Activated CD8-positive, alpha-beta T cell treated with anti-CD3 and anti-CD28 coated beads for 36 hours (primary cell): ENCODE measurements at regions of chr1 and their contacts with region 1.

Region 1: GRCh38 chr1:205485338-205486228 is 18.9 kb upstream of the CDK18 start:
- DNase-seq: peak; percentile 79
- ATAC-seq: peak; percentile 76
- H3K4me3 Mint-ChIP-seq: no peak overlapping the region
- H3K27ac Mint-ChIP-seq: no peak overlapping the region
- H3K4me1 Mint-ChIP-seq: peaks cover 27% of the 10 kb centered on the region
- H3K27me3 Mint-ChIP-seq: peaks cover 42% of the 10 kb centered on the region
- CTCF ChIP-seq: peak; percentile 95

Region 2: GRCh38 chr1:205273551-205273982 is 212.0 kb before region 1 on chr1:
- CTCF ChIA-PET with region 1: interaction called, 21 read pairs
- POLR2A ChIA-PET with region 1: no interaction called
- intact Hi-C with region 1: no loop called
- DNase-seq: peak; percentile 92
- ATAC-seq: peak; percentile 94
- H3K4me3 Mint-ChIP-seq: no peak overlapping the region
- H3K27ac Mint-ChIP-seq: no peak overlapping the region
- H3K4me1 Mint-ChIP-seq: peaks cover 33% of the 10 kb centered on the region
- H3K27me3 Mint-ChIP-seq: no peaks in the 10 kb centered on the region
- CTCF ChIP-seq: peak; percentile 99

Region 3: DNA sequence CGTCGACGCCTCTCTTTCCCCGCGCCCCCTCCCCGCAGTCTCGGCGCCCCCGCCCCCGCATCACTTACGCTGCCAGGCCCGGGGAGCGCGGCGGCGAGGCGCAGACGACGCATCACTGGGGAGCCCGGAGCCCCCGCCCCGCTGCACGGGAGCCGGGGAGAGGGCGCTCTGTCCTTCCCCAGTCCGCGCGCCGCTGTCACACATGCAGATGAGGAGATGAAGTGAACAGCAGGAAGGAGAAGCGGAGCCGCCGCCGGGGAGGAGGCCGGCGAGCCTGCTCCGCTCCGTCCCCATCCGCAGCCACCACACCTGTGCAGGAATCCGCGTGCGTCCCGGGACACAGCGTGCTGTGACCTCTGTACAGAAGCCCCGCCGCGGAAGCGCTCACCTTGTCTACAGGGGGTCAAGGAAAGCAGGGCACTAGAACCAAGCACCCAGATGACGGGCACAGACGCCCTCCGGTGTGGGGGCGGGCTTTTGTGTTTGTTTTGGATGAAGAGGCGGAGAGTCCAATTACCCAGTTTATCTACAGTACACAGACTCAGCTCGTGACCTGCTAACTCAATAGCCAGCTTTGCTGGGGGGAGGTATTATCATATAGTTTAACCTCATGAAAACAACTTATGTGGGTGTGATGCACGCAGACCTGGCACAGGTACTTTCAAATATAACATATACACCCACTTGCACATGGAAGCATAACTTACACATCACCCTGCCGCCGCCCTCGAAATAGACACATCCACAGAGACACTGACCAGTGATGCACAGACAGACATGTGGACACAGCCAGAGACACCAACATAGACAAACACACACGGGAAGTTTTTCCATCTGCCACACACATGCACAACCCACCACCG is 141.3 kb before region 1 on chr1:
- CTCF ChIA-PET with region 1: interaction called, 15 read pairs
- POLR2A ChIA-PET with region 1: no interaction called
- intact Hi-C with region 1: no loop called
- DNase-seq: peak; percentile 65
- ATAC-seq: peak; percentile 77
- H3K4me3 Mint-ChIP-seq: peak overlapping the region; percentile 35
- H3K27ac Mint-ChIP-seq: no peak overlapping the region
- H3K4me1 Mint-ChIP-seq: peaks cover 11% of the 10 kb centered on the region
- H3K27me3 Mint-ChIP-seq: peaks cover 42% of the 10 kb centered on the region
- CTCF ChIP-seq: no peak

Region 4: GRCh38 chr1:205396967-205397616 is 88.5 kb before region 1 on chr1:
- CTCF ChIA-PET with region 1: interaction called, 199 read pairs
- POLR2A ChIA-PET with region 1: no interaction called
- intact Hi-C with region 1: loop called (anchors 1 kb)
- DNase-seq: peak; percentile 29
- ATAC-seq: peak; percentile 88
- H3K4me3 Mint-ChIP-seq: no peak overlapping the region
- H3K27ac Mint-ChIP-seq: no peak overlapping the region
- H3K4me1 Mint-ChIP-seq: no peaks in the 10 kb centered on the region
- H3K27me3 Mint-ChIP-seq: peaks cover 4% of the 10 kb centered on the region
- CTCF ChIP-seq: peak; percentile 87

Region 5: DNA sequence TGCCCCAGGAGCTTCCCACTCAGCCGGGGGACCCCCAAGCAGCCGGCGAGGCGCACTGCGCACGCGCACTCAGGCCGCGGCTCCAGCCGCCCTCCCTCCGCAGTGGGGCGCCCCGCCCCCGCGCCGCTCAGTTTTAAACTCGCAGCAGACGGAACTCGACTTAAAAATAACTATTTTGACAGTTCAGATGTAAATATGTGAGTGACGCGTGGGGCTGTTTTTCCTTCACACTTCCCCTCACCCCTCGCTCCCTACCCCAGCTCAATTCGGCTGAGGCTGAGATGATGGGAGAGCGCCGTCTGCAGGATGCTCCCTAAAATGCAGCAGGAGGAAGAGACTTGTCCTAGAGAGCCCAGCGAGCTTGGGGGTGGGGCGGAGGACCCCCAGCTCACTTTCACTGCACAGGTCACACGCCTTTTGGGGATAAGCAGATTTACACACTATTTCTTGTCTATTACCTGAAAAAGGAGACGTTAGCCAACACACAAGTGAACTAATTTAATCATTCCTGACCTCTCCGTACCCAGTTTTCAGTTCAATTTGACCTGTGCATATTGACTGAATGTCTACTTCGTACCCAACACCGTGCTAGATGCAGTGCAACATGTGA is 54.8 kb before region 1 on chr1:
- CTCF ChIA-PET with region 1: interaction called, 153 read pairs
- POLR2A ChIA-PET with region 1: no interaction called
- intact Hi-C with region 1: no loop called
- DNase-seq: peak; percentile 70
- ATAC-seq: peak; percentile 87
- H3K4me3 Mint-ChIP-seq: peak overlapping the region; percentile 74
- H3K27ac Mint-ChIP-seq: no peak overlapping the region
- H3K4me1 Mint-ChIP-seq: peaks cover 7% of the 10 kb centered on the region
- H3K27me3 Mint-ChIP-seq: no peaks in the 10 kb centered on the region
- CTCF ChIP-seq: peak; percentile 82

Region 6: GRCh38 chr1:205504311-205504984 is 18.9 kb after region 1 on chr1 and contains the start of gene CDK18:
- CTCF ChIA-PET with region 1: interaction called, 63 read pairs
- POLR2A ChIA-PET with region 1: no interaction called
- intact Hi-C with region 1: no loop called
- DNase-seq: peak; percentile 68
- ATAC-seq: peak; percentile 78
- H3K4me3 Mint-ChIP-seq: peak within 1 kb of the TSS; percentile 73
- H3K27ac Mint-ChIP-seq: peak within 1 kb of the TSS; percentile 22
- H3K4me1 Mint-ChIP-seq: peaks cover 12% of the 10 kb centered on the region
- H3K27me3 Mint-ChIP-seq: no peaks in the 10 kb centered on the region
- CTCF ChIP-seq: no peak
- total RNA-seq, gene CDK18: 8.4 to 10.4 TPM